Motor neuron (in vitro differentiated cells): ENCODE measurements at regions of chrX and their contacts with region 1.

Region 1: DNA sequence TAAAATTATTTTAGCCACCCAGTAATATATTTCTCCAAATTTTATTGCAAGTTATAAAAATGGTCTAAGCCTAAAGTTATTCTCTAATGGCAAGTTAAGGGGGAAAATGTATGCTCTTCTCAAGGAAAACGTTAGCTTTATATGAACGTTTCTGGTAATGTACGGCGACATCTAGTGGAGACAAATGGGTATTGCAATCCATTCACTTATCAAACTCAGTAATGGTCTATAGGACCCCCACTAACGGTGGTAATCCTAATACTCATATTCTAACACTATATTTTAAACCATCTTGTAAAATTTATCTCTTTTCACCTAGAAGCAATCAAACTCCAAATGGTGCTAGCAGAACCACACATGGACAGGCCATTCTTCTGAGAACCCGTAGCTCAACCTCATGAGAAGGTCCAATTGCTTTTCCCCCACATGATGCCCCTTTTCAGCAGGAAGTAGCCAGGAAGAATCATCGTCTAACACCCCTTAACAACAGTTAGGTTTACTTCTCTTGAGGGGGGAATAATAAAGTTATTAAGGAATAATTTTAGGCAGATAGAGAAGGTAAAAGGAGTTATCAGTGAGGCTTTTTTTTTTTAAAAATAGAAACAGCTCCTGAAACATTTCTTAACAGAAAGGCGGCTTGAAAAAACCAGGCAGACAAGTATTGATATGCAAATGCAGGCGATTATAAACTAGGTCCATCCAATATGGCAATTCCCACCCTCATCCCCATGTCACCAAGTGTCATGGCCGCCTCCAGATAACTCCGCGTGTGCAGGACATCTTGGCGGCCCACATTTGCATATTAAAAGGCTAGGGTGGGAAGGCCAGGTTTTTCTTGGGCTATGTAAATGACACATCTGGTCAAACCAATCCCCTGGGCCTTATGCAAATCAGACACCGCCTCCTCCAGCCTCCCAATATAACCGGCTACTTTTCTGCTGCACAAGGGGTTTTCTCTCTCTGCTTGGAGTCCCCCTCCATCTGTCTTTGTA is 35.0 kb downstream of the NUDT11 start:
- ATAC-seq: peak in 7 of 8 experiments; percentile 30 to 74 (median 51)
- H3K4me3 ChIP-seq: no peak overlapping the region
- H3K27ac ChIP-seq: peak overlapping the region in 1 of 2 donors; percentile 74
- H3K4me1 ChIP-seq: no peaks in the 10 kb centered on the region

Region 2: DNA sequence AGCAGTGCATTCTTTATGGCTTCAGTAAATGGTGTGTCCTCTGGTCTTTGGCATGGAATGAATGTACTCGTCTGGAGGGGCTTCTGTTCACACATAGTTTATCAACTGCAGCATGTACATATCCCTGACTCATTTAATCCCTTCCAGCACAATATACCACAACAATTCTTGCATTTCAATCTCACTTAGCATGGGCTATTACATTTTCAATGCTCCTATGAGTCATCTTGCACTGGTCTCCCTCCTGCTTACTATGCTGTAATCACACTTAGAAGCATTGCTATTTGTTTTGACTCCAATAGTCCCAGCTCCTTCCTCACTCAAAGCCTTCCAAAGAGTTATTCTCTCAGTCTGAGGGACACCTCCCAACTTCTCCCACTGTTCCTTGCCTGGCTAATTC is 309.6 kb before region 1 on chrX:
- in situ Hi-C with region 1: loop called in 1 of 9 experiments (anchors 25 kb)
- ATAC-seq: peak in 6 of 8 experiments; percentile 50 to 99 (median 85)
- H3K4me3 ChIP-seq: no peak overlapping the region
- H3K27ac ChIP-seq: no peak overlapping the region
- H3K4me1 ChIP-seq: no peaks in the 10 kb centered on the region